ENCODE measurements at regions of chr14 and their contacts with region 1.

Region 1: DNA sequence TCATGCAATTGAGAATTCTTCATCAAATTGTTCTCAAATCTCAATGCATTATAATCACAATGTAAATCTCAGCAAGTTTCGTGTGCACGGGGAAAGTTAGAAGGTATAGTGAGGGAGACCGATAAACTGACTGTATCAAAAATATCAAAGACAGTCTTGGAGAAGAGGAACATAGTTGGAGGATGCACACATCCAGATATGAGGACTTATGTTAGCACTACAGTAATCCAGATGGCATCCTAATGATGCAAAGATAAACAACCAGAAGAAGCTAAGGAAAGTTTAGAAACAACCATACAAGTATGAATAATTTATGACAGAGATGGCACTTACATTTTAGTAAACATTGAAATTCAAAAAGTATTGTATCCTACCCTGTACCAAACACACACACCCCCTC is 760.1 kb downstream of the RPS29 start:
- DNase-seq: no peak
- H3K4me3 ChIP-seq: no peak overlapping the region
- CTCF ChIP-seq: no peak
- POLR2A ChIP-seq: no peak

Region 2: DNA sequence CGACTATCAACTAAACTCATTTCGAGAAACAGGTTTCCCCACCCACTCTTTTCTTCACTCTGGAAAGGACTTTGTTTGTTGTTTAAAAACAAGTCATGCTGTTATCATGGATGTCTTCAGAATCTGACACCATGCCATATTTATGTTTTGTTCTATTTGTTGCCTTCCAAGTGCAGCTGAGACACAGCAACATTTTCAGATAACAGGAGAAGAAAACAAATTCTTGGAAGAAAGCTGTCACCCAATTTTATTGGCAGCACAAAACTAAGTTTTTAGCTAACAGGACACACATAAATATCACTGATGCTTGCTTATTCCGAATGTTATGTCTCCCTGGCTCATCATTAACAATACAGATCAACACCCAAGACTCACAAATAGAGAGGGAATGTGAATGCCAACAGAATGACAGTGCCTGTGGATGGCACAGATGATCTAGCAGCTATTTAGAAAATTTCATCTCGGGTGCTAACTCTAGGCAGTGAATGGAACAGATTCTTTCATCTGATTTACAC is 612.3 kb after region 1 on chr14:
- intact Hi-C with region 1: loop called (anchors 10 kb)
- DNase-seq: no peak
- H3K4me3 ChIP-seq: no peak overlapping the region
- CTCF ChIP-seq: no peak
- POLR2A ChIP-seq: no peak